Activated CD4-positive, alpha-beta T cell treated with anti-CD3 and anti-CD28 coated beads, Interleukin-2, amount 10 ng/mL, durations not matched to agents 7 days and 5 days (primary cell): ENCODE measurements at regions of chr6 and their contacts with region 1.

Region 1: DNA sequence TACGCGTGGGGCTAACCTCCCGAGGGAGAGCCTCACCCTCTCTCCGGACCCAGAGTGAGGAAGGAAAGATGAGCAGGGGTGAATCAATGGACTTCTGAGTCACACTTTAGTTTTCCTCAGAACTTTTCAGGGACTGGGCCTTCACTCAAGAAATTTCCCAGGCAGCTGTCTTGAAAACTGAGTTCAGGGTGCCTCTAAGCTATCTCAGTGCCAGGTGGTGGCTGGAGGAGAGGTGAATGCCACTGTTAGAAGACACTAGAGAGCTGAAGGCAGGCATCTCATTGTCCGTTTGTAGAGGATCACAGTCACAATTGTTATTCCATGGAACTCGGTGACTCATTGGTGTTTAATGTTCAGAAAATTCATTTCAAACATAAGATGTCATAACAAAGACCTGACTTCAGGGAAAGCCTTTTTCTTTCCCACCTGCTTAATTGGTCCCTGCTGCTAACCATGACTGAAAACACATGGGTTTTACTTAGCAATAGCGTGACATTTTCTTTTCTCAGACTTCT is 5.3 kb upstream of the SERPINB6 start:
- DNase-seq: no peak
- H3K4me3 Mint-ChIP-seq: peak overlapping the region; percentile 8
- H3K27ac Mint-ChIP-seq: peak overlapping the region; percentile 76
- H3K4me1 Mint-ChIP-seq: peaks cover 24% of the 10 kb centered on the region
- H3K27me3 Mint-ChIP-seq: peaks cover 23% of the 10 kb centered on the region

Region 2: DNA sequence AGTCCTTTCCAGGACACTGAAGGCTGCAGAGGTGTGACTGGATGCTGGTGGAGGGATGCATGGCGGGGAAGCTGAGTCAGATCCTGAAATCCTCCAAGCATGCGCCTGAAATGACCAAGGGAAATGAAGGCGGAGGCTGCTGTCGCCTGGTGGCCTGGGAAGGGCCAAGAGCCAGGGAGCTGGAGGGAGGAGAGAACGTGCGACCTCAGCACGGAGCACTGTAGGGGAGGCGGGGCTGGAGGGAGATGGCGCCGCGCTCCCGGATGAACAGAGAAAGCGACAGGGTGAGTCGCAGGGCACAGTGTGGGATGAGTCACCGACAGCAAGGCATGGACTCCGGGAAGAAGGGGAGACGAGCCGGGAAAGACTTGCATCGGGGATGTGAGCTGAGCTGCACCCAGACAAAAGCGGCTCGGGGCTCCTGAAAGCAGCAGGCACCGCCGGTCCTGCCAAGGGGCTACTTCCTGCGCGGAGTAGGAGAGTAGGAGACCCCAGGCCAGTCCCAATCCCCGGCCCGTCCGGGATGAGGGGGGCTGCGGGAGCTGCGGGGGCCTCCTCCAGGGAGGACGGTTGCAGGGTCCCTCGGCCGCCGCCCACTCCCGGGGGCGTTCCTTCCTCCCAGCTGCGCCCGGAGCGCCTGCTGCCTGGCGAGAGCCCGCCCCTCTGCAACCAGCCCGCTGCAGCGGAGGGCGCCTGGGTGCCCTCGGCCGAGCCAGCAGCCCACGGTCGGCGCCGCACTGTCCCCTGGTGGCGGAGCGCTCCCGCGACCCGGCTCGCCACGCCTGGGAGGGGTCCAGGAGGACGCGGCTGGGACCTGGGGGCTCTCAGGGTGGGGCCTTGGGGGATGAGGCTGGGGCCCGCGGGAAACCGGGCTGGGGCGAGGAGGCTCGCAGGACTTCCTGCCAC is 12.1 kb after region 1 on chr6:
- CTCF ChIA-PET with region 1: interaction called, 52 read pairs
- POLR2A ChIA-PET with region 1: no interaction called
- DNase-seq: peak; percentile 76
- H3K4me3 Mint-ChIP-seq: peak overlapping the region; percentile 87
- H3K27ac Mint-ChIP-seq: peak overlapping the region; percentile 98
- H3K4me1 Mint-ChIP-seq: peaks cover 27% of the 10 kb centered on the region
- H3K27me3 Mint-ChIP-seq: peaks cover 3% of the 10 kb centered on the region